ENCODE measurements at regions of chr11 and their contacts with region 1.

Region 1: DNA sequence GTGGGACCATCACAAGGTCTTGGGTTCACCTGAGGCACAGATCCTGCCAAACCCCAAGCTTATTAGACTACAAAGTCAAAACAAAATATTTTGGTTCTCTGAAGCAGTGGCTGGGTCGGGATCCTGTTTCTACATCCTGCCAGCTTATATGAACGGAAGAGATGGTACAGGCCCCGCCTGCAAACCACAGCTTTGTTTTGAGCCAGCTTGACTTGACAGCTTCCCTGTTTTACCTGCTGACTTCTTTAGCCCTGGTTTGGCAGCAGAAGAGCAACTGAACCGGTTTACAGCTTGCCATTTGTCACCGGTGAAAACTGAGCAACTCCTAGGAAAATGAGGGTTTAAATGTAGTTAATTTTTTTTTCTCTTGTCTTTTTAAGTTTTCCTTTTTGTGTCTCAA is 11.4 kb downstream of the PACS1 start:
- DNase-seq: no peak
- H3K4me3 ChIP-seq: no peak overlapping the region
- CTCF ChIP-seq: no peak

Region 2: DNA sequence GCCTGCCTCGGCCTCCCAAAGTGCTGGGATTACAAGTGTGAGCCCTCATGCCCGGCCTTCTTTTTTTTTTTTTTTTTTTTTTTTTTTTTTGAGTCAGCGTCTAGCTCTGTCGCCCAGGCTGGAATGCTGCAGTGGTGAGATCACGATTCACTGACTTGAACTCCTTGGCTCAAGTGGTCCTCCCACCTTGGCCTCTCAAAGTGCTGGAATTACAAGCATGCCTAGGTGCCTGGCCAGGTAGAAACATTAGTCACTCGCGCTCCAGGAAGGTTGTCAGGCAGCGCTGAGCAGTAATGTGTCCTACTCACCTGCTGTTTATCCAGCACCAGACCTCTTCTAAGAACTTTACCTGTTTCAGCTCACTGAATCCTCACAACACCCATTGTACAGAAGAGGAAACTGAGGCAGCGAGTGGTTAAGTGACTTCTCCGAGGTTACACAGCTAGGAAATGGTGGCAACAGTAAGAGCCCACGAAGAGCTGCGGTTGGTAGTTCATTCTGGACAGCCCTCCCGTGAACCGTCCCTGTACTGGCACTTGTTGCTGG is 70.2 kb before region 1 on chr11:
- in situ Hi-C with region 1: no loop called
- DNase-seq: no peak
- H3K4me3 ChIP-seq: no peak overlapping the region
- CTCF ChIP-seq: no peak

Region 3: DNA sequence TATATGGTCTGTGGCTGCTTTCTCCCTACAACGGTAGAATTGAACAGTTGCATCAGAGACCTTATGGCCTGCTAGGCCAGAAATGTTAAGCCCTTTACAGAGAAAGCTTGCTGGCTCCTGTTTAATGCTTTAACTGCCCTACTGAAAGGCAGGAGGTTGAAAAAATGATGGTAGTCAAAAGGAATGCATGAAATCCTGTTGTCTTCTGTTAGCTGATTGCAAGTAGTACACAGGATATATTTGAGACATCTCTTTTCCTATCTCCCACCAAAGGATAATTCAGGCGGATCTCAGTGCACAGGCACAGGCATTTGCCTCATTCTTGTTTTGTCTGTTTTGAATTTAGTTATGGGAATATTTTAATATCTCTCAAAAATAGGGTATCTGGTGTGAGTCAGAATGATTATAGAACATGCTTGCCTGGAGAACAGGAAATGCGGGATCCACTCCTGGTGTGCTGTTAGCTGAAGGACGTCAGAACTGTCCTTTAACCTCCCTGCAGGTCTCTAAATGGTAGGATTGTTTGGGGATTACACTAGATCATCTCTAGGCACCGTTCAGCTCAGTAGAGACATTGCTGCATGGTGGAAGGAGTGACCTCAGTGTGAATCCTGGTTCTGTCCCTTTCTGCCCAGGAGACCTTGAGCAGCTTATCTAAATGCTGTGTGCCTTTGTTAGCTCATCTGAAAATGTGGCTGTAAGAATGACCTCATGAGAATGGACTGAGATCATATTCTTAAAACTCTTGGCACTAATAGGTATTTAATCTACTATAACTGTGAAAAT is 38.0 kb after region 1 on chr11:
- in situ Hi-C with region 1: loop called (anchors 5 kb)
- DNase-seq: peak; percentile 71
- H3K4me3 ChIP-seq: no peak overlapping the region
- CTCF ChIP-seq: no peak

Region 4: GRCh38 chr11:66638177-66639065 is 556.9 kb after region 1 on chr11 and contains the start of gene RBM4:
- in situ Hi-C with region 1: no loop called
- DNase-seq: peak; percentile 100
- H3K4me3 ChIP-seq: peak within 1 kb of the TSS; percentile 68
- CTCF ChIP-seq: peak; percentile 11